ENCODE measurements at regions of chr6 and their contacts with region 1.

Region 1: DNA sequence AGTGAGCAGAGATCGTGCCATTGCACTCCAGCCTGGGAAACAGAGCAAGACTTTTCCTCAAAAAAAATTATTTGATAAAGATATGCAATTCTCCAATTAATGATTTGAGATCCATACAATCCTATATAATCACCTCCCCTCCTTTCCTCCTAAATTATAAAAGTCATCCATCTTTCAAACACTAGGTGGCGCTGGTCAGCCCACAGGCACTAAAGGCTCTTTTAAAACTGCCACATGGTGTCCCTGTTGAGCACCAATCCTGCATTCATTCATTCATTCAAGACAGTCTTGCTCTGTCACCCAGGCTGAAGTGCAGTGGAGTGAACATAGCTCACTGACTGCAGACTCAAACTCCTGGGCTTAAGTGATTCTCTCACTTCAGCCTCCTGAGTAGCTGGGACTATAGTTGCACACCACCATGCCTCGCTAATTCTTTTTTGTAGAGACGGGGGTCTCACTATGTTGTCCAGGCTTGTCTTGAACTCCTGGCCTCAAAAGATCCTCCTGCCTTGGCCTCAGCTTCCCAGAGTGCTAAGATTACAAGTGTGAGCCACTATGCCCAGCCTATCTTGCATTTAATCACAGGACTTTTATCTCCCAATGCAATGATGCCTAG is 58.7 kb upstream of the SLC2A12 start:
- DNase-seq: peak; percentile 79 to 85 (median 83)
- ATAC-seq: peak; percentile 86
- H3K4me3 ChIP-seq: no peak overlapping the region
- H3K27ac ChIP-seq: no peak overlapping the region
- H3K4me1 ChIP-seq: peaks cover 0 to 9% of the 10 kb centered on the region in 2 experiments; a peak in 2 of 5 replicates
- H3K27me3 ChIP-seq: peaks cover 10 to 20% of the 10 kb centered on the region in 2 experiments; a peak in 4 of 5 replicates
- CTCF ChIP-seq: peak; percentile 95 to 100 (median 100)
- EP300 ChIP-seq: no peak
- POLR2A ChIP-seq: no peak
- RAD21 ChIP-seq: peak; percentile 74 to 85

Region 2: DNA sequence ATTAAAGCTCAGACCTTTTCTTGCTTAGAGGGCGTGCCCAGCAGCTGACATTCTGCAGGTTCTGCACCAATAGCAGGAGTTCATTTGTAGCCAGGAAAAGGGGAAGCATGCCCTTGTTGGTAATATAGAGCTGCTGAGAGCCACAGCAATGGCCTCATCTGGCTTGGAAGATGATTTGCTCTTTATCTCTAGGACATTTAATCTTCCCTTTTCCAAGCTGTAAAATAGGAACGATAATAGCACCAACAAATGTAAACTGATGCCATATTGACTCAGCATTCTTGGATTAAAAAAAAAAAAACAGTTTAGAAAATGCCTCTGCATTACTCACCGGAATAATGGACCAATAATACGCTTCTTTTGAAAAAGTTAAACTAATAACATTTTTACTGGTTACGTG is 34.6 kb after region 1 on chr6:
- CTCF ChIA-PET with region 1: interaction called, 3 read pairs
- POLR2A ChIA-PET with region 1: no interaction called
- in situ Hi-C with region 1: no loop called
- intact Hi-C with region 1: loop called (anchors 5 kb)
- DNase-seq: peak in 1 of 4 experiments; percentile 12
- ATAC-seq: peak; percentile 80
- H3K4me3 ChIP-seq: no peak overlapping the region
- H3K27ac ChIP-seq: no peak overlapping the region
- H3K4me1 ChIP-seq: peaks cover 0 to 17% of the 10 kb centered on the region in 2 experiments; a peak in 3 of 5 replicates
- H3K27me3 ChIP-seq: no peaks in the 10 kb centered on the region
- CTCF ChIP-seq: no peak
- EP300 ChIP-seq: no peak
- POLR2A ChIP-seq: no peak
- RAD21 ChIP-seq: no peak

Region 3: DNA sequence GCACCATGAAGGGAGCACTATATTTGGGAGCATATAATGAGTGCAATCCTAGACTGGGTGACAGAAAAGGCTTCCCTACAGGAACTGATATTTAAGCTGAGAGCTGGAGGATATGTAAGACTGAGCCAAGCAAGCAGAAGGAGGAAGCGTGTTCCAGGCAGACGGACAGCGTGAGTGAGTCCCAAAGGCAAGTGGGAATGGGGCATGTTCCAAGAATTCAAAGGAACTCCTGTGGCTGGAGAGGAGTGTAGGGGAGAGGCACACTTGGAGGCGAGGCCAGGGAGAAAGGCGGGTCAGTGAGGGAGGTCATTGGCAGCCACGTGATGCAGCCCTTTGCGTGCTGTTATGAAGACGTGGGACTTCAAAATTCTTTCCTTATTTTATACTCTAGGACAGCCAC is 234.6 kb after region 1 on chr6:
- CTCF ChIA-PET with region 1: no interaction called
- POLR2A ChIA-PET with region 1: no interaction called
- in situ Hi-C with region 1: no loop called
- intact Hi-C with region 1: no loop called
- DNase-seq: no peak
- ATAC-seq: no peak; the same call in 2 of the 3 replicates
- H3K4me3 ChIP-seq: no peak overlapping the region
- H3K27ac ChIP-seq: no peak overlapping the region
- H3K4me1 ChIP-seq: no peaks in the 10 kb centered on the region; a peak in 2 of 5 replicates
- H3K27me3 ChIP-seq: no peaks in the 10 kb centered on the region; a peak in 1 of 5 replicates
- CTCF ChIP-seq: no peak
- EP300 ChIP-seq: no peak
- POLR2A ChIP-seq: no peak
- RAD21 ChIP-seq: no peak

Region 4: DNA sequence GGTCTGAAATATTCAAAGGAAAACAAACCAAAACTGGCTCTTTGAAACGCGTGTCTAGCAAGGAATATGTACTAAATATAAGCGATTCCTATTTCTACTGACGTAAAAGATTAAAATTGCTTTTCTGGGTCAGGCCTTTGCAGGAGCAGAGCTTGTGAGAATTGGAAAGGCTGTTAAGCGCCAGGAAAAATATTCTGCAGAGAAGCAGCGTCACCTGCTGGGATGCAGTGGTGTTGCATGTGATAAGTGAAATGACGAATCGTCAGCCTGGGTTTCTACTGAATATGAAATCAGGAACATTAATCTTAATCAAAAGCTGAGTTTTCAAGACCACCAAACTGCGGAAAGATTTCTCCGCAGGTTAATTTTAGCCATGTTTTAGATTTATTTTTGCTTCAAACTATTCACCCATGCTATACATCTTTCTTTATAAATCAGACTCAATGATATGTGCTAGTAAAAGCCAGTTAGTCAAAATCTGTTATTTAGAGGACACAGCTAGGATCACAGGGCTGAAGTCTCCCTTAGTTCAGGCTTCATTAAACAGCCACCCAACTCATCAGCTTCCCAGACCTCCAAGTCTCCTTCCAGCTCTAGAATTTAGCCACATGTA is 771.4 kb after region 1 on chr6:
- CTCF ChIA-PET with region 1: interaction called, 16 read pairs
- POLR2A ChIA-PET with region 1: no interaction called
- in situ Hi-C with region 1: no loop called
- intact Hi-C with region 1: loop called (anchors 5 kb)
- DNase-seq: peak; percentile 35 to 62 (median 46)
- ATAC-seq: peak; percentile 87
- H3K4me3 ChIP-seq: no peak overlapping the region
- H3K27ac ChIP-seq: no peak overlapping the region
- H3K4me1 ChIP-seq: no peaks in the 10 kb centered on the region
- H3K27me3 ChIP-seq: no peaks in the 10 kb centered on the region; a peak in 5 of 5 replicates
- CTCF ChIP-seq: peak; percentile 79 to 89 (median 82)
- EP300 ChIP-seq: no peak
- POLR2A ChIP-seq: no peak
- RAD21 ChIP-seq: peak; percentile 77 to 87

Region 5: DNA sequence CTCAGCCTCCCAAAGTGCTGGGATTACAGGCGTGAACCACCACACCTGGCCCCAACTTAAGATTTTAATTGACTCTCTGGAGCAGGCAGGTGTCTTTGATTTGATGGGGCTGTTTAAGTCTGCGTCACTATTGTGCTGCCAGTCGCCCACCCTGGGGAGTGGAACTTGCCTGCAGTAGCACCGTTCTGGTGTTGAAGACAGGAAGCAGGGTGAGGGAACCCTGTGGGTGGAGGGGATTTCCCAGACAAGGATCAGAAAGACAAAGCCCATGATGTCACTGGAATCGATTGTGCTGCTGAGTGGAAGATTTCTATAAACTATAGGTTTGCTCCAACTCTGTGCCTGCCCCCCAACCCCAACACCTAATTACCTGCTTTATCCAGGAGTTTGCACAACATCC is 827.7 kb after region 1 on chr6:
- CTCF ChIA-PET with region 1: interaction called, 15 read pairs
- POLR2A ChIA-PET with region 1: no interaction called
- in situ Hi-C with region 1: no loop called
- intact Hi-C with region 1: loop called (anchors 5 kb)
- DNase-seq: no peak
- ATAC-seq: no peak
- H3K4me3 ChIP-seq: no peak overlapping the region
- H3K27ac ChIP-seq: no peak overlapping the region
- H3K4me1 ChIP-seq: no peaks in the 10 kb centered on the region; a peak in 1 of 5 replicates
- H3K27me3 ChIP-seq: peaks cover 0 to 2% of the 10 kb centered on the region in 2 experiments; a peak in 1 of 5 replicates
- CTCF ChIP-seq: no peak
- EP300 ChIP-seq: no peak
- POLR2A ChIP-seq: no peak
- RAD21 ChIP-seq: no peak

Measured in K562 (cell line).